ENCODE measurements at regions of chr14 and their contacts with region 1.

Region 1: GRCh38 chr14:77097700-77098528 is at the start of gene CIPC:
- DNase-seq: peak; percentile 92 to 96 (median 94)
- ATAC-seq: peak; percentile 93
- H3K4me3 ChIP-seq: peak within 1 kb of the TSS; percentile 82
- H3K27ac ChIP-seq: peak within 1 kb of the TSS; percentile 95
- H3K4me1 ChIP-seq: peaks cover 9 to 13% of the 10 kb centered on the region in 2 experiments; a peak in 4 of 5 replicates
- H3K27me3 ChIP-seq: no peaks in the 10 kb centered on the region
- CTCF ChIP-seq: no peak
- EP300 ChIP-seq: peak; percentile 23; the same call in 1 of the 2 replicates
- POLR2A ChIP-seq: peak; percentile 71
- RAD21 ChIP-seq: no peak
- polyA plus RNA-seq, gene CIPC: 5.0 to 6.5 TPM

Region 2: GRCh38 chr14:76876076-76876475 is 221.8 kb before region 1 on chr14:
- CTCF ChIA-PET with region 1: interaction called, 33 read pairs
- POLR2A ChIA-PET with region 1: interaction called, 3 read pairs
- in situ Hi-C with region 1: no loop called
- intact Hi-C with region 1: loop called (anchors 1 kb)
- DNase-seq: peak; percentile 61 to 68 (median 62)
- ATAC-seq: peak; percentile 91
- H3K4me3 ChIP-seq: no peak overlapping the region
- H3K27ac ChIP-seq: no peak overlapping the region
- H3K4me1 ChIP-seq: no peaks in the 10 kb centered on the region
- H3K27me3 ChIP-seq: peaks cover 0 to 32% of the 10 kb centered on the region in 2 experiments; a peak in 2 of 5 replicates
- CTCF ChIP-seq: peak; percentile 77 to 89 (median 80)
- EP300 ChIP-seq: no peak
- POLR2A ChIP-seq: no peak
- RAD21 ChIP-seq: peak; percentile 92 to 95

Region 3: DNA sequence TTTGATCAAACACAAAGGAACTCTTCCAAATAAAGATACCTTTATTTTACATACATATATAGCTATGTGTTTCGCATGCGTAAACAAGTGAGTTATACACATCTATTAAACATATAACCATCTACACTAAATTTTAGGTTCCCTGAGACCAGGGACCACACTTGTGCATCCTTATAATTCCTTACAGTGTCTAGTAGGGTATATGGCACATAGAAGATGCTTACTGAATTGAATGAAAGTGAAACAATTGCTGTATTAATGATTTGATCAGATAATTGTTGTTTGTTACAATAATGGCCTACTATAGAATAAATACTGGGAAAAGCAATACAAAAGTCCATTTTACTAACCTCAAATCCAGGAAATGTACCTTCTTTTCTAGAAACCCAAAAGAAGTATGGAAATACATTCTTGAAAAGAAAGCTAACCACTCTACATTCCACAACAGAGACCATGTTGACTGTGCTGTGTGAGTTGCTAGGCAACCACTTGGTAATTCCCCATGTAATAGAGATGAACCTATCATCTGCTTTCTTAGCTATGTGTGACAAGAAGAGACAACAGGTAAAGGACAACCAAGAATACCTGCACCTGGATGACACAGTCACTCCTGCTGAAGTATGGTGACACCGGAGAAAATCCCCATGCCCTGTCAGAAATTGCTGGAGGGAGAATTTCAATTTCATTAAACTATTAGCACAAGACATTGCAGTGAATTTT is 11.7 kb before region 1 on chr14:
- CTCF ChIA-PET with region 1: no interaction called
- POLR2A ChIA-PET with region 1: interaction called, 11 read pairs
- in situ Hi-C with region 1: no loop called
- intact Hi-C with region 1: no loop called
- DNase-seq: no peak
- ATAC-seq: no peak
- H3K4me3 ChIP-seq: no peak overlapping the region
- H3K27ac ChIP-seq: no peak overlapping the region
- H3K4me1 ChIP-seq: peaks cover 0 to 13% of the 10 kb centered on the region in 2 experiments; a peak in 3 of 5 replicates
- H3K27me3 ChIP-seq: peaks cover 7 to 10% of the 10 kb centered on the region in 2 experiments; a peak in 3 of 5 replicates
- CTCF ChIP-seq: no peak
- EP300 ChIP-seq: no peak
- POLR2A ChIP-seq: no peak
- RAD21 ChIP-seq: no peak